PC-3 (cell line): ENCODE measurements at regions of chr3 and their contacts with region 1.

Region 1: GRCh38 chr3:85193565-85193964 is 234.8 kb downstream of the CADM2 start:
- DNase-seq: peak; percentile 52
- ATAC-seq: peak; percentile 55; the same call in 1 of the 2 replicates
- H3K4me3 ChIP-seq: no peak overlapping the region
- H3K27ac ChIP-seq: no peak overlapping the region
- H3K4me1 ChIP-seq: no peaks in the 10 kb centered on the region
- H3K27me3 ChIP-seq: no peaks in the 10 kb centered on the region
- CTCF ChIP-seq: peak; percentile 68

Region 2: DNA sequence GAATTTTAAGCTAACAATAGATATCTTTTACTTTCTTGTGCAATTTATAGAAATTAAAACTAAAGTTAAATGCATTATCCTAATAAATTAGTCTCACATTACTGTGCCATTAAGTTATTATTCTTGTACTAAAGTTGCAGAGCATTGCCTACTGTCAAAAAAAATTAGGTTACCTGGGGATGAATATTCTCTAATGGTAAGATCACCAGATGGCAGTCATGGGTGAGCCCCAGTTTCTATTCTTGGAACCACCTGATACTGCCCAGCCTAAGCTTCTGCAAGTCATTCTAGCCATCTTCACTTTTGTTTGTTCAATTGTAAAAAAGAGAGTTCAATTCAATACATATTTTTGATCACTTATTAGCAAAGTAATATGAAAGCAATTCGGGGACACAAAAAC is 21.6 kb before region 1 on chr3:
- CTCF ChIA-PET with region 1: no interaction called
- POLR2A ChIA-PET with region 1: no interaction called
- intact Hi-C with region 1: no loop called
- DNase-seq: no peak
- ATAC-seq: no peak
- H3K4me3 ChIP-seq: no peak overlapping the region
- H3K27ac ChIP-seq: no peak overlapping the region
- H3K4me1 ChIP-seq: peaks cover 18% of the 10 kb centered on the region
- H3K27me3 ChIP-seq: no peaks in the 10 kb centered on the region
- CTCF ChIP-seq: no peak

Region 3: DNA sequence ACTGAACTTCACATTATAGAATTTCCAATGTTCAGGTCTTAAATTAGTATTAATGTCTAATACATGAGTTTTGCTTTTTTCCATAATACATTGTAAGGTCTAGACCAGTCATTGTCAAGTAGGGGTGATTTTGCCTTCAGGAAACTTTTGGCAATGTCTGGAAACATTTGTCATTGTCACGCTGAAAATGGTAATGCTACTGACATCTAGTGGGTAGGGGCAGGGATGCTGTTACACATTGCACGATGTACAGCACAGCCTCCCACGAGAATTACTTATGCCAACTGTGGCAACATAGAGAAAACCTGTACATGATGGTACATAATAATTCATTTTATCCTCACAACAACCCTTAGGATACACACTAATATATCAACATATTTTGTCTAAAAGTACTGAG is 149.3 kb after region 1 on chr3:
- CTCF ChIA-PET with region 1: no interaction called
- POLR2A ChIA-PET with region 1: no interaction called
- intact Hi-C with region 1: loop called (anchors 5 kb)
- DNase-seq: peak; percentile 69
- ATAC-seq: peak; percentile 87
- H3K4me3 ChIP-seq: no peak overlapping the region
- H3K27ac ChIP-seq: no peak overlapping the region
- H3K4me1 ChIP-seq: peaks cover 13% of the 10 kb centered on the region
- H3K27me3 ChIP-seq: no peaks in the 10 kb centered on the region
- CTCF ChIP-seq: peak; percentile 87